Right ventricle myocardium superior (tissue), 1 donor: ENCODE measurements at regions of chr11 and their contacts with region 1.

Region 1: GRCh38 chr11:68927280-68928135 is 23.8 kb downstream of the IGHMBP2 start:
- DNase-seq: peak; percentile 53
- ATAC-seq: peak; percentile 41

Region 2: GRCh38 chr11:69088676-69089146 is 161.2 kb after region 1 on chr11:
- intact Hi-C with region 1: loop called (anchors 10 kb)
- DNase-seq: peak; percentile 70
- ATAC-seq: peak; percentile 79